ENCODE measurements at regions of chr1 and their contacts with region 1.

Region 1: DNA sequence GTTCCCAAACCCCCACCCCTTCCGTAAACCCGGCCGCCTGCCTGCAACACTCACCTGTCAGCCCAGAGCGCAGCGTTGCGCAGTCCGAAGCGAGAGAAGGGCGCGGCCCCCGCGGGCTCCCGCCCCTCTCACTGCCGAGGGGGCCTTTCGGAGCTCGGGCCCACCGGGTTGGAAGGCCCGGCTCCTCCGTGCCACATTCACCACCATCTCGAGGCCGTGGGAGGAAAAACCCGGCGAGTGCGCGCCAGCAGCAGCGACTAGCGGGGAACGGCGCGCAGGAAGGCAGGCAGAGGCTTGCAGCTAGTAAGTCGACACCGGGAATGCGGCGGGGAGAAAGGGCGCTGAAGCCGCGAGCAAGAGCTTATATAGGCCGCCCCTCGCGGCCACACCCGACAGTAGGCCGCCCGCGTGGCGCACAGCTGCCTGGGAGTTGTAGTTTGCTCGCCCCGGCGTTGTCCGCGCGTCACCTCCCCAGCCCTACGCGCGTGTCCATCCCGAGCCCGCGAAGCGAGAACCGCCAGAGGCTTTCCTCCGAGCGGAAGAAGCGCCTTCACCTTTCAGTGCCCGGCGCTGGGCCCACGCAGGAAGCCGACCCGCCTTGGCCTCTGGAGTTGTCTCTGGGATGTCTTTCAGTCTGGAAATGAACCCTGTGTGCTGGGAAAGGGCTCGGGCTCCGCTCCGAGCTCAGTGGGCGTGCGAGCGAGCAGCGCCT is 10.4 kb upstream of the RAB42 start:
- DNase-seq: peak; percentile 95
- ATAC-seq: peak; percentile 73
- H3K4me3 Mint-ChIP-seq: peak overlapping the region; percentile 92
- H3K27ac Mint-ChIP-seq: peak overlapping the region; percentile 83; the same call in 1 of the 2 replicates
- H3K4me1 Mint-ChIP-seq: peaks cover 24% of the 10 kb centered on the region
- H3K27me3 Mint-ChIP-seq: no peaks in the 10 kb centered on the region
- CTCF ChIP-seq: no peak

Region 2: DNA sequence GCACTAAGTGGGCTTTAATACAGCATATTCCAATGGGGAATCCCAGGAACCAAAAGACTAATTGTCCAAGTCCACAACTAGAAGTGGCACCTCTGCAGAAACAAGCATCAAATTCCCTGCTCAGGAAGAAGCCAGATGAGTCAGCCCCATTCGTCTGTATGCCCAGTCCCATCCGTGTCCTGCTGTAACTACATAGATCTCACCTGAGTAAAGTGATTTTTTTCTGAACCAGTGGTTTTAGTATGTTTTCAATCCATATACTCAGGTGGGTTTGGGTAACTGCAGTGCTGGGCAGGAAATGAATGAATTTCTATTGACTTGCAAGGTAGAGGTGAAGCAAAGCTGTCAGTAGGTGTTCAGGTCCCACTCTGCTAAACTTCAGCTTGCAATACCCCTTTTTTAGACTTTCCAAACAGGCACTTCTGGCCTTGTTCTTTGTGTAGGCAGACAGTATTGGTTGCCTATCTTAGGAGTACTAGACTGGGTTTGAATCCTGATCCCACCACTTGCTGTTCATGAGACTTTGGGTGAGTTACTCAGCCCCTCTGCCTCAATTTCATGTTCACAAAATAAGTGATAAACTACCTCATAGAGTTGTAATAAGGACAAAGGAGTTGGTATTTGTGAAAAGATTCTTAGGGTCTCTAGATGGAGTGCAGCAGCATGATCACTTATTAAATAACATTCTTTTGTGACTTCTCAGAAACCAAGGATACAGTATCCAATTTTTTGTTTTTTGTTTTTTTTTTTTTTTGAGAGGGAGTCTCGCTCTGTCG is 70.8 kb before region 1 on chr1:
- CTCF ChIA-PET with region 1: no interaction called
- POLR2A ChIA-PET with region 1: interaction called, 19 read pairs
- DNase-seq: no peak
- ATAC-seq: peak; percentile 2
- H3K4me3 Mint-ChIP-seq: peak overlapping the region; percentile 99
- H3K27ac Mint-ChIP-seq: peak overlapping the region; percentile 99
- H3K4me1 Mint-ChIP-seq: peaks cover 40% of the 10 kb centered on the region
- H3K27me3 Mint-ChIP-seq: peaks cover 6% of the 10 kb centered on the region
- CTCF ChIP-seq: no peak

Region 3: DNA sequence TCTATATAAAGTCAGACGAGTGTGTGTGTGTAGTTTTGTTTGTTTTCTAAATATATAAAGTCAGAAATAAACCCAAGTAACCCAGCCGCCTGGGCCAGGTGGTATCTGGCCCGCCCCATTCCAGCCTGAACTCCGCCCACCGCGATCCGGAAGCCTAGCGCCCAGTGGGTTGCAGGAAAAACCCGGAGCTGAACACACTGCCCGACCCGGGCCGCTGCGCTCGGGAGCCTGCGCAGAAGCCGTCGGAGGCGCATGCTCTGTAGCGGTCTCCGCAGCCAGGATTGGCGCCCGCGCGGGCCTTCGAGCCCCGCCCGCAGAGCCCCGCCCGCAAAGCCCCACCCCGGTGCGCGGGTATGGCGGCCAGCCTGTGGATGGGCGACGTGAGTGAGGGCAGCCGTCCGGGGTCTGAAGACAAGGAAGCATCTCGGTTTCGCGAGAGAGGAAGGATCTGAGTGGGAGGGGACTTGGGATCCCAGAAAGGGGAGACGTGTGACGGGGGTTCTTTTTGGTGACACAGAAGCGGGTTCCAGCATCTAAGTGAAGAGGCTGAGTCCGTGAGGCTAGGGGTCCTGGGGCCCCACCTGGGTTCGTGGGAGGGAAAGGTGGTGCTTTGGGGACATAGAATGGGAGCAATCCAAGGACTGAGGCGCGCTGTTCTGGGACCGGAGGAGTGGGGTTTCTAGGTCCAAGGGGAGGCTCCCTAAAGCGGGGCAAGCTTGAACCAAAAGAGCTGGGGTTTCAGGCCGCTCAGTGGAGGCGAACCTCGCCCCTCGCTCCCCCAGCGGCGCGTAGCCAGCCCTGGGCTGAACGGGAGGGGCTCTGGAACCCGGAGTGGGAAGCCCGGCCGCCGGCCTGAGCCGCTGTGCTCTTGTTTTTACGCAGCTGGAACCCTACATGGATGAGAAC is 28.7 kb before region 1 on chr1 and contains the start of gene TRNAU1AP:
- CTCF ChIA-PET with region 1: interaction called, 8 read pairs
- POLR2A ChIA-PET with region 1: interaction called, 17 read pairs
- DNase-seq: peak; percentile 97
- ATAC-seq: peak; percentile 95
- H3K4me3 Mint-ChIP-seq: peak within 1 kb of the TSS; percentile 96
- H3K27ac Mint-ChIP-seq: peak within 1 kb of the TSS; percentile 93
- H3K4me1 Mint-ChIP-seq: peaks cover 8% of the 10 kb centered on the region
- H3K27me3 Mint-ChIP-seq: no peaks in the 10 kb centered on the region
- CTCF ChIP-seq: no peak
- total RNA-seq, gene TRNAU1AP: 30.4 to 40.6 TPM (median 34.0 TPM) in 3 replicates

Region 4: GRCh38 chr1:28602536-28603439 is 21.1 kb after region 1 on chr1:
- CTCF ChIA-PET with region 1: interaction called, 19 read pairs
- POLR2A ChIA-PET with region 1: interaction called, 16 read pairs
- DNase-seq: peak; percentile 57
- ATAC-seq: peak; percentile 67
- H3K4me3 Mint-ChIP-seq: no peak overlapping the region
- H3K27ac Mint-ChIP-seq: peak overlapping the region; percentile 91; the same call in 1 of the 2 replicates
- H3K4me1 Mint-ChIP-seq: peaks cover 23% of the 10 kb centered on the region
- H3K27me3 Mint-ChIP-seq: no peaks in the 10 kb centered on the region
- CTCF ChIP-seq: peak; percentile 24; the same call in 1 of the 2 replicates

Measured in WTC11 (cell line).